ENCODE measurements at regions of chr9 and their contacts with region 1.

Region 1: GRCh38 chr9:32161720-32162119 is 222.7 kb upstream of the ACO1 start:
- DNase-seq: no peak
- ATAC-seq: no peak
- H3K4me3 ChIP-seq: no peak overlapping the region
- H3K27ac ChIP-seq: no peak overlapping the region
- H3K4me1 ChIP-seq: no peaks in the 10 kb centered on the region
- H3K27me3 ChIP-seq: no peaks in the 10 kb centered on the region
- CTCF ChIP-seq: no peak
- POLR2A ChIP-seq: no peak
- RAD21 ChIP-seq: no peak

Region 2: GRCh38 chr9:32136700-32137339 is 24.9 kb before region 1 on chr9:
- CTCF ChIA-PET with region 1: no interaction called
- POLR2A ChIA-PET with region 1: no interaction called
- RAD21 ChIA-PET with region 1: no interaction called
- intact Hi-C with region 1: no loop called
- DNase-seq: no peak
- ATAC-seq: peak; percentile 59
- H3K4me3 ChIP-seq: no peak overlapping the region
- H3K27ac ChIP-seq: no peak overlapping the region
- H3K4me1 ChIP-seq: no peaks in the 10 kb centered on the region
- H3K27me3 ChIP-seq: no peaks in the 10 kb centered on the region
- CTCF ChIP-seq: 0 out of 6 replicates have a peak, but pooled peaks of 2 of the 3 experiments have one; percentile 13 to 22
- POLR2A ChIP-seq: no peak
- RAD21 ChIP-seq: no peak

Region 3: DNA sequence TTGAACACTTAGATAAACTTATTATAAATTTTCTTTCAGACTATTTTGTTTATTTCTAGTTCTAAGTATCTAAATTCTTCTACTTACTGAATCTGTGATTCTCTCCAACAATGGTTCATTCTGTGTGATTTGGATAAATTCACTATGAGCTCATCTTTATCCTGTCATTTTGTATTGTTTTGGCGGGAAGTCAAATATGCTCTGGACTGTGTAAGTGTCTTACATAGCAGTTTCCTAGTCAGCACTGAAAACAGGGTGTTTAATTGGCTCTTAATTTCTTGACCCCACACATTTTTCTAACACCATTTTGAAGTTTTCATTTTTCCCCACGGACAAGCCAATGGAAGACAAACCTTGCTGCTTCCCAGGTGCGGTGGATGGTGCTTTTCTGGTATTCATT is 15.7 kb after region 1 on chr9:
- CTCF ChIA-PET with region 1: no interaction called
- POLR2A ChIA-PET with region 1: no interaction called
- RAD21 ChIA-PET with region 1: no interaction called
- intact Hi-C with region 1: loop called (anchors 1 kb)
- DNase-seq: no peak
- ATAC-seq: no peak
- H3K4me3 ChIP-seq: no peak overlapping the region
- H3K27ac ChIP-seq: no peak overlapping the region
- H3K4me1 ChIP-seq: no peaks in the 10 kb centered on the region
- H3K27me3 ChIP-seq: no peaks in the 10 kb centered on the region
- CTCF ChIP-seq: no peak
- POLR2A ChIP-seq: no peak
- RAD21 ChIP-seq: no peak

Region 4: DNA sequence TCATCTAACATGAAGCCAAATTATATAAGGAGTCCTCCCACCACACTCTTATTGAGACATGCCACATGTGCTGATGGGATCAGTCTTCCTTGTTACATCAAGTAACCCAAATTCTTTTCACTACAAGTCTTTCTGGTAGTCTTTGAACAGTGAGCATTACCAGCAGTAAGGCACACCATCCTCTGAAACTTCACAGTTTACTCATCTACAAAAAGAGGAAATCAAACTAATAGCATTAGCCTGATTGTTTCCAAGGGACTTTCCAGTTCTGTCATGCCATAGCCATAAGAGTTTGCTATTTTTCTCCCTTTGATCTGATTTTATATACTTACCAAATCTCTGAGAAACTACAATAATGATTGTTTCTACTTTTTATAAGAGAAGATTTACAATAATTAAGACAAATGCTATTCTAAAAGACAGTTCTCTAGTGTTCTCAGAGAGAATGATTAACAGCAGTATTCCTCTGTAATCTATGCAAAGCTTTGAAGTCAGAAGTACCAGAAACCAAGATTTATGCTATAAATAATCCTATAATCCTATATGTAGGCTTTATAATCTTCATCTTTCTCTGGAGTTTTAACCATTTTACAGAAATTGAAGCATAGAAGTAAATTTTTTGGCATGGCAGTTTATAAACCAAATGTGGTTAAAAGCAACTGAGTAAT is 56.5 kb after region 1 on chr9:
- CTCF ChIA-PET with region 1: no interaction called
- POLR2A ChIA-PET with region 1: no interaction called
- RAD21 ChIA-PET with region 1: no interaction called
- intact Hi-C with region 1: no loop called
- DNase-seq: no peak
- ATAC-seq: no peak
- H3K4me3 ChIP-seq: no peak overlapping the region
- H3K27ac ChIP-seq: no peak overlapping the region
- H3K4me1 ChIP-seq: no peaks in the 10 kb centered on the region
- H3K27me3 ChIP-seq: no peaks in the 10 kb centered on the region
- CTCF ChIP-seq: no peak
- POLR2A ChIP-seq: no peak
- RAD21 ChIP-seq: no peak